BJ (cell line): ENCODE measurements at regions of chr15 and their contacts with region 1.

Region 1: GRCh38 chr15:63048115-63048775 is 5.7 kb downstream of the TPM1 start:
- DNase-seq: no peak
- H3K4me3 ChIP-seq: peak overlapping the region; percentile 49
- H3K27me3 ChIP-seq: no peaks in the 10 kb centered on the region
- CTCF ChIP-seq: peak; percentile 94

Region 2: DNA sequence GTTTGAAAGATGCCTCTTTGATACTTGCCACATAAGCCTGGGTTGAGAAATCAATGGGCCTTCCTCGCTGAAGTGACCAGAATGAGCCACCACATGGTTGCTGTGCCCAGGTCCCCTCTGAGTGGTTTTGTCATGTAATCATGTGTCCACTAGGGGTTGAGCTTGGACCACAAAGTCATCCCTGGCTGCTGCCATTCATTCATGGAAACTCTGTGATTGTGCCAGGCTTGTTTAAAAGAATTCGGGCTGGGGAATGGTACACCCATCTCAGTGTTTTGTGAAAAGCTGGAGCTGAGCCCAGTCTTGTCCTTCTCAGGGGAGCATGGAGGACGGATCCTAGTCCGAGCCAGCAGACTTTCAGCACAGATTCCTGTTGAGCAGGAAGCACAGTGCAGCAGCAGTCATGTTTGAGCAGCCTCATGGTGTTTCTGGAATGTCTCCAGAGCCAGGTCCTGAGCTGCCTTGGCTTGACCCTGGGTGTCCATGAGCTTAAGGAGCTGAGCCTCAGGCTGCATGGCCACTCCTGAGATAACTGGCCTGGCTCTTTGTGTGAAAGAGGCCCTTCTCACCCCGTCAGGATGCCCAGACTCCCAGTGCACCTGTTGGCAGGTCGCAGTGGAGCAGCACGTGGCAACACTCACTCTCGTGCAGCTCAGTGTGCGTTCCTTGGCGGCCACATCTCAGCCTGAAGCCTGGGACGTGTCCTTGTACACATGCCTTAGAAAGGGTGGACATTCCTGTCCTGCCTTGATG is 266.0 kb before region 1 on chr15:
- CTCF ChIA-PET with region 1: interaction called, 27 read pairs
- POLR2A ChIA-PET with region 1: interaction called, 3 read pairs
- DNase-seq: no peak
- H3K4me3 ChIP-seq: no peak overlapping the region
- H3K27me3 ChIP-seq: no peaks in the 10 kb centered on the region
- CTCF ChIP-seq: peak; percentile 71

Region 3: GRCh38 chr15:62874959-62875625 is 173.2 kb before region 1 on chr15:
- CTCF ChIA-PET with region 1: interaction called, 11 read pairs
- POLR2A ChIA-PET with region 1: no interaction called
- DNase-seq: no peak
- H3K4me3 ChIP-seq: no peak overlapping the region
- H3K27me3 ChIP-seq: no peaks in the 10 kb centered on the region
- CTCF ChIP-seq: no peak

Region 4: DNA sequence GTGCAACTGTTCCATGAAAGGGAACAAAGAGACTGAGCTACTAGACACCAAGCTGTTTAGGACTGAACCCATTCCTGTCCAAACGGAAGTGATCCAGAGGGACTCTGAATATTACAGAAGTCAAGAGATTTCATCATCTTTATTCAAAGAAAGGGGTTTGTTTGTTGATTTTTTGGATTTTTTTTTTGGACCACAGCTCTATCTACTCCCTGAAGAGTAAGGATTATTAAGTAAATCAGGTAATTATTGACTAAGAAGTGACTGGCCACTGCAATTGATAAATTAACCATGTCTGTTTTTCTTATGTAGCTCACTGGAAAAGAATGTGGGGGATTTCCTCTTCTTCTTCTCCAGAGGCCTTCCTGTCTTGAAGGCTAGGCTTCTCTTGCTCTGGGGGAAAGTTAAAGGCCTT is 152.3 kb before region 1 on chr15:
- CTCF ChIA-PET with region 1: interaction called, 10 read pairs
- POLR2A ChIA-PET with region 1: interaction called, 5 read pairs
- DNase-seq: no peak
- H3K4me3 ChIP-seq: no peak overlapping the region
- H3K27me3 ChIP-seq: no peaks in the 10 kb centered on the region
- CTCF ChIP-seq: no peak

Region 5: GRCh38 chr15:63030101-63030551 is 18.1 kb before region 1 on chr15:
- CTCF ChIA-PET with region 1: interaction called, 10 read pairs
- POLR2A ChIA-PET with region 1: interaction called, 5 read pairs
- DNase-seq: peak; percentile 76
- H3K4me3 ChIP-seq: no peak overlapping the region
- H3K27me3 ChIP-seq: no peaks in the 10 kb centered on the region
- CTCF ChIP-seq: no peak

Region 6: DNA sequence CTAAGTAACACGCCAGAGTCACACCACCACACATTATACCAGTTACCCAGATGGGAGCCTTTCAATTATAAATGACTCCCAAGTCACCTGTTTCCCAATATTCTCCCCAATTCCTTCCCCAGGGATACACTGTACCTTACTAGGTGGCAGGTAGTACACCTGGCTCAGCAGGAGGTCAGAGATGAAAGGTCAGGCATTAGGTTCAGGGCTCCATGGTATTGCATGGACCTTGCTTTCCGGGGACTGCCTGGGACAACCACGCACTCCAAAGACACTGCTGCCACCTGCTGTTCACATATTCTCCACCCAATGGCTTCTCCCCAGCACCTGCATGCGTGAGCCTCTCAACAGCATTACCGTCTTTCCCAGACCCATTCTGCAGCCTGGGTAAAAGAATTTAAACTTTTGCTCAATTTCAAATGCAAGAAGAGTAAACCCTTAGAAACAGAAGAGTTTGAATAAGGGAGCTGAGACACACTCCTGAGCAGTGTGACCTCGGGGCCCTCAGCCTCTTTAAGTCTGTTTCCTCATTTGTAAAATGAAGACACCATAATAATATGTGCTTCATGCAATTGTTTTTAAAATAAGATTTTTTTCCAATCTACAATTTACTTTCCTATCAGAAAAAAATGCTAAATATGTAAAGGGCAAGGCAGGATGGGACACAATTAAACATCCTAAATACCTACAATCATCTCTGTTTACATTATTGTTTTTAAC is 45.4 kb after region 1 on chr15:
- CTCF ChIA-PET with region 1: interaction called, 26 read pairs
- POLR2A ChIA-PET with region 1: interaction called, 4 read pairs
- DNase-seq: no peak
- H3K4me3 ChIP-seq: no peak overlapping the region
- H3K27me3 ChIP-seq: no peaks in the 10 kb centered on the region
- CTCF ChIP-seq: peak; percentile 88

Region 7: DNA sequence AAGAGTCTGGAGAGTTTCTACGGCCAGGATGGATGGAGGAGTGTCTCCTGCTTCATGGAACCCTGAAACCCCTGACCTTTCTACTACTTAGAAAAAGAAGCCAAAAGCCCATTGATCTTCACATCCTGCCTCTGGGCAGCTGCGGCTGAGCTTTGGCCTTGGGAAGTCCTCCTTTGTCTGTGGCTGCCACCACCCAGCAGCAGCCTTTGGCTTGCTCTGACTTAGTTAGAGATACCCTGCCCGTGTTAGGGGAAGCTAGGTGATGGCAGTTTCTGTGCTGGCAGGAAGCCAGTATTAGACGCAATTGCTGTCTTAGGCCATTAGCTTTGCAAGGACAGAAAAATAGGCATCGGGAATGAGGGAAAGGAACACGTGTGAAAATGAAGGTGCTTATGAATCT is 247.9 kb after region 1 on chr15:
- CTCF ChIA-PET with region 1: no interaction called
- POLR2A ChIA-PET with region 1: no interaction called
- DNase-seq: no peak
- H3K4me3 ChIP-seq: no peak overlapping the region
- H3K27me3 ChIP-seq: no peaks in the 10 kb centered on the region
- CTCF ChIP-seq: no peak